Psoas muscle (tissue), 8 donors: ENCODE measurements at regions of chr2 and their contacts with region 1.

Region 1: DNA sequence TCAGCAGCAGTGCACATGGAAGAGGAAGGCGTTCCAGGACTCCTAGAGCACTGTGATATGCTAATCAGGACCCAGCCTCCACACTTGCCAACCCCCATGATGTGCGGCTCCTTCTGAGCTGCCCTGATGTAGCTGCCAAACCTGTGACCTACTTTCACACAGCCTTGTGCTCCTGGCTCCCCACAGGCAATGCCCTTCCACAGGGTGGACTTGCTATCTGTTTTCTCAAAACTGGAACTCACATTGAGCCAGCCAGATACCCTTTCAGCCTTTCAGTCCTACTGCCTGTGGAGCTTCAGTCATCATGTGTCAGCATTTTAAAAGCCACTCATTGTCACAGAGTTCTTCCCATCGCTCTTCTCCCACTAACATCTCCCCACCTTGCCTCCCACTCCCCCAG is 181.6 kb downstream of the AFF3 start:
- DNase-seq: no peak
- ATAC-seq: peak in 3 of 4 donors; percentile 55 to 82 (median 60)
- H3K4me3 ChIP-seq: no peak overlapping the region
- H3K27ac ChIP-seq: peak overlapping the region; percentile 51
- H3K4me1 ChIP-seq: no peaks in the 10 kb centered on the region
- H3K27me3 ChIP-seq: no peaks in the 10 kb centered on the region
- CTCF ChIP-seq: no peak

Region 2: GRCh38 chr2:99926986-99927385 is 33.8 kb before region 1 on chr2:
- intact Hi-C with region 1: loop called in 1 of 2 experiments (anchors 2 kb)
- DNase-seq: no peak
- ATAC-seq: no peak
- H3K4me3 ChIP-seq: no peak overlapping the region
- H3K27ac ChIP-seq: no peak overlapping the region
- H3K4me1 ChIP-seq: no peaks in the 10 kb centered on the region
- H3K27me3 ChIP-seq: no peaks in the 10 kb centered on the region
- CTCF ChIP-seq: no peak